Body of pancreas (tissue), 4 donors: ENCODE measurements at regions of chr6 and their contacts with region 1.

Region 1: DNA sequence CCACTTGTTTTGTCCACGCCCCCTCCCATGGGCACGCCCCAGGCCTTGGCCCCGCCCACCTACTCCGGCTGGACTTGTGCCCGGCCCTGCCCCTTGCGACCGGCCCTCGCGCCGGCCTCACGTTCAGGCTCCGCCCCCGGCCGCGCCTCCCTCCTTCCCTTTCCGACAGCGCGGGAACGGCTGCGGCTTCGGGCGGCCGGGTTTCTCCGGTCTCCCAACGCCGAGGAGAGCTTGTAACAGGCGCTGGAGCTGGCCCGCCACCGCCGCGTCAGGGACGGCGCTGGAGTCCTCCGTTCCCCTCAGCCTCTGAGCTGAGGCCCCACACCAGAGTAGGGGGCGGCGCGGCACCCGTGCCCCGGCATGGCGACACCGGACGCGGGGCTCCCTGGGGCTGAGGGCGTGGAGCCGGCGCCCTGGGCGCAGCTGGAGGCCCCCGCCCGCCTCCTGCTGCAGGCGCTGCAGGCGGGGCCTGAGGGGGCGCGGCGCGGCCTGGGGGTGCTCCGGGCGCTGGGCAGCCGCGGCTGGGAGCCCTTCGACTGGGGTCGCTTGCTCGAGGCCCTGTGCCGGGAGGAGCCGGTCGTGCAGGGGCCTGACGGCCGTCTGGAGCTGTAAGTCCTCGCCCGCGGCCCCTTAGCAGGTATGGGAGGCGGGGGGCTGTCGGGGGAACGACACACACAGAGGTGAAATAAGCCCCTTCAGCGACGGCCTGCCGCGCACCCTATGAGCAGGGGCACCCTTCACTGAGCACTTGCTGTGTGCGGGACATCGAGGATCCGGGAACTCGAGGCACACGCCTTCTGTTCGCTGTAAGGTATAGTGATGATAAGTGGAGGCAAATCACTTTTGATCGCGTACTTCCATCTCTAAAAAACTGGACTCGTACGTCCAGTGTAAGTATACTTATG is at the start of gene FANCE:
- DNase-seq: peak; percentile 93 to 97 (median 96)
- ATAC-seq: peak; percentile 98
- H3K4me3 ChIP-seq: peak within 1 kb of the TSS in 1 of 2 donors; percentile 30
- H3K27ac ChIP-seq: peak within 1 kb of the TSS in 3 of 4 donors; percentile 41 to 60 (median 56)
- H3K4me1 ChIP-seq: peaks cover 23% of the 10 kb centered on the region
- H3K27me3 ChIP-seq: no peaks in the 10 kb centered on the region
- CTCF ChIP-seq: no peak
- POLR2A ChIP-seq: peak in 1 of 3 donors; percentile 14
- total RNA-seq, gene FANCE: 4.9 to 9.2 TPM

Region 2: GRCh38 chr6:35120746-35121145 is 331.7 kb before region 1 on chr6:
- intact Hi-C with region 1: no loop called
- DNase-seq: no peak
- ATAC-seq: no peak
- H3K4me3 ChIP-seq: no peak overlapping the region
- H3K27ac ChIP-seq: no peak overlapping the region
- H3K4me1 ChIP-seq: no peaks in the 10 kb centered on the region
- H3K27me3 ChIP-seq: no peaks in the 10 kb centered on the region
- CTCF ChIP-seq: no peak
- POLR2A ChIP-seq: no peak

Region 3: DNA sequence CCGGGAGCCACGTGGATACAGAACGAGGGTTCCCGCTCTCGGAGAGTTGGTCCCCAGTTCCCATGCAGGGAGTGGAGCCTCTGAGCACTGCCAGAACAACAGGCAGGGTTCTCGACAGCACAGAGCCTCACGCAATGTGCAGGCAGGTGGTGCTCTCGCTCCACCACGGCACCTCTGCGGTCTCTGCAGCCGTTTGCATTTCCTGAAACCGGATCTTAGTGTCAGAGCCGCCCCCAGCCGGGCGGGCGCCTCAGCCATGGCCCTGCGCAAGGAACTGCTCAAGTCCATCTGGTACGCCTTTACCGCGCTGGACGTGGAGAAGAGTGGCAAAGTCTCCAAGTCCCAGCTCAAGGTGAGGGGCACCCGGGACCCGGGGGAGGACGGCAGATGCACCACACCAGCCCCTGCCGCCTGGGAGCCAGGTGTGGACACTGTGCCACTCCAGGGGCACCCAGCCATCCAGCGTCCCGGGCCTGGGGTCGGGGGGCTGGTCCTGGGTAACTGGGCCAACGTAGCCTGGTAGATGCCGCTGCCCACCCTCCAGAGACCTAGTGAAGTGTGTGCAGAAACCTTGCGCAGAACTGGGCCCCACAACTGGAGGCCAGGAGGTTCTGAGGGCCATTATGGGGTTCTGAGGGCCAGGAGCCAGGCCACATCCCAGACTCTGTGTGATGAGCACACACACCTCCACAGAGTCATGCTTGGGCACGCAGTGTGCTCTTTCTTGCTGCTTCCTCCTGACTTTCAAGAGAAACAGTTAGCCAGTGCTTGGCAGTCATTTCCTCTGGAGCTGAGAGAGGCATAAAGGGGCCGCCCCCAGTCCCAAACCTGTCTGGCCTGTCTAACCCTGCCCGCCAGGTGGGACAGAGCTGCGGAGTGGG is 154.6 kb before region 1 on chr6 and contains the start of gene DEF6:
- intact Hi-C with region 1: loop called (anchors 5 kb)
- DNase-seq: peak; percentile 87 to 93 (median 91)
- ATAC-seq: peak; percentile 96
- H3K4me3 ChIP-seq: peak within 1 kb of the TSS; percentile 21 to 71
- H3K27ac ChIP-seq: peak within 1 kb of the TSS; percentile 32 to 76 (median 59)
- H3K4me1 ChIP-seq: peaks cover 35% of the 10 kb centered on the region
- H3K27me3 ChIP-seq: no peaks in the 10 kb centered on the region
- CTCF ChIP-seq: peak; percentile 53 to 98 (median 94)
- POLR2A ChIP-seq: peak; percentile 71 to 90 (median 84)
- total RNA-seq, gene DEF6: 10.2 to 23.3 TPM

Region 4: GRCh38 chr6:35346561-35346960 is 105.9 kb before region 1 on chr6:
- intact Hi-C with region 1: loop called (anchors 5 kb)
- DNase-seq: no peak
- ATAC-seq: no peak
- H3K4me3 ChIP-seq: no peak overlapping the region
- H3K27ac ChIP-seq: no peak overlapping the region
- H3K4me1 ChIP-seq: peaks cover 27% of the 10 kb centered on the region
- H3K27me3 ChIP-seq: no peaks in the 10 kb centered on the region
- CTCF ChIP-seq: no peak
- POLR2A ChIP-seq: no peak

Region 5: DNA sequence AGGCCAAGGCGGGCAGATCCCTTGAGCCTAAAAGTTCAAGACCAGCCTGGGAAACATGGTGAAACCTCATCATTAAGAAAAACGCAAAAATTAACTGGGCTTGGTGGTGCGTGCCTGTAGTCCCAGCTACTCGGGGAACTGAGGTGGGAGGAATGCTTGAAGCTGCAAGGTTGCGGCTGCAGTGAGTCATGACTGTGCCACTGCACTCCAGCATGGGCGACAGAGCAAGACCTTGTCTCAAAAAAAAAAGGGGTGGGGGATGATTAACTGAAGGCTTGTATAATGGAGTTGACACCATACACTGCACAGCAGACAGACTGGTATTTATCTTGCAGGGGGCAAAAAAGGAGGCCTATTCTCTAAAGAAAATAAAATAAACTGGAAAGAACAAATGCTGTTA is 440.8 kb after region 1 on chr6:
- intact Hi-C with region 1: no loop called
- DNase-seq: no peak
- ATAC-seq: no peak
- H3K4me3 ChIP-seq: no peak overlapping the region
- H3K27ac ChIP-seq: no peak overlapping the region
- H3K4me1 ChIP-seq: no peaks in the 10 kb centered on the region
- H3K27me3 ChIP-seq: no peaks in the 10 kb centered on the region
- CTCF ChIP-seq: no peak
- POLR2A ChIP-seq: no peak